Heart left ventricle (tissue), 16 donors: ENCODE measurements at regions of chr9 and their contacts with region 1.

Region 1: GRCh38 chr9:118459913-118460312 is 755.7 kb downstream of the TLR4 start:
- DNase-seq: peak in 3 of 5 donors; percentile 22 to 31 (median 27)
- ATAC-seq: peak; percentile 82 to 90 (median 89)
- H3K4me3 ChIP-seq: no peak overlapping the region
- H3K27ac ChIP-seq: peak overlapping the region in 3 of 12 donors; percentile 32 to 47 (median 43)
- H3K4me1 ChIP-seq: peaks cover 0 to 6% (median 0%) of the 10 kb centered on the region in 12 donors
- H3K27me3 ChIP-seq: no peaks in the 10 kb centered on the region
- CTCF ChIP-seq: no peak
- POLR2A ChIP-seq: no peak

Region 2: DNA sequence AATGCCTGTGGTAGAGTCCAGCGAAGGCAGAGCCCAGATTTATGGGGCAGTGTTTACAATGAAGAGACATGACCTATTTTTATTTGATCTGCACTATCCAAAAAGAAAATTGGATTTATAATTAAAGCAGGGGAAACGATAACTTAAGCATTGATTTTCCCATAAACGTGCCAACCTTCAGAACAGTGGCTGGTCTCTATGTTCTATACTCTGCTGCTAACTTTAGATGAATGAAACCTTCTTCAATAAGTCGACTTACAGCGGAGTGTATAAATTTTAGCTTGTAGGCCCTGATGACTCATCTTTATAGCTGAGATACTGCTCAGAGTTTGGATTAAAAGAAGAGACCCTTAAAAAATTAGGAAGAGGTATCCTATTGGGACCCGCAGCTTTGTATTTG is 303.1 kb before region 1 on chr9:
- intact Hi-C with region 1: no loop called
- DNase-seq: no peak
- ATAC-seq: no peak
- H3K4me3 ChIP-seq: no peak overlapping the region
- H3K27ac ChIP-seq: no peak overlapping the region
- H3K4me1 ChIP-seq: no peaks in the 10 kb centered on the region
- H3K27me3 ChIP-seq: no peaks in the 10 kb centered on the region
- CTCF ChIP-seq: no peak
- POLR2A ChIP-seq: no peak

Region 3: DNA sequence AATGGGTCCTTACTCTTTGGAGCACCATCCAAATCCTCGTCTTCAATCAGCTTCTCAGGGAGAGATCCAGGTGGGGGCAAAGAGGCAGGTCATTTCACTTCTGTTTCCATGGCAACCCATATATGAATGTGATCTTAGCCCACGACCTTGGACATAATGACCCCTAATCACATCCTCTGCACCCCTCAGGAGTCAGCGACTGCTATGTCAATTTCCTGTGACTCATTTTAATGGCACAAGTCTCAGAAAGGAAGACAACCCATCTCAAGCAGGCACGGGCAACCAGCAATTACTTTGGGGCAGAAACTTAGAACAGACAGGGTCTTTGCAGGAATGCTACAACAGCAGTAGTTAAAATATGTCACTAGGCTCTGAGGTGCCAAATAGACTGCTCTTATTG is 164.5 kb before region 1 on chr9:
- intact Hi-C with region 1: no loop called
- DNase-seq: no peak
- ATAC-seq: no peak
- H3K4me3 ChIP-seq: no peak overlapping the region
- H3K27ac ChIP-seq: no peak overlapping the region
- H3K4me1 ChIP-seq: no peaks in the 10 kb centered on the region
- H3K27me3 ChIP-seq: no peaks in the 10 kb centered on the region
- CTCF ChIP-seq: no peak
- POLR2A ChIP-seq: no peak

Region 4: GRCh38 chr9:118331622-118332045 is 128.3 kb before region 1 on chr9:
- intact Hi-C with region 1: loop called in 1 of 10 experiments (anchors 10 kb)
- DNase-seq: peak in 4 of 5 donors; percentile 28 to 43 (median 32)
- ATAC-seq: peak; percentile 94 to 97 (median 96)
- H3K4me3 ChIP-seq: no peak overlapping the region
- H3K27ac ChIP-seq: peak overlapping the region in 7 of 12 donors; percentile 29 to 74 (median 51)
- H3K4me1 ChIP-seq: peaks cover 0 to 5% (median 0%) of the 10 kb centered on the region in 12 donors
- H3K27me3 ChIP-seq: no peaks in the 10 kb centered on the region
- CTCF ChIP-seq: no peak
- POLR2A ChIP-seq: no peak

Region 5: DNA sequence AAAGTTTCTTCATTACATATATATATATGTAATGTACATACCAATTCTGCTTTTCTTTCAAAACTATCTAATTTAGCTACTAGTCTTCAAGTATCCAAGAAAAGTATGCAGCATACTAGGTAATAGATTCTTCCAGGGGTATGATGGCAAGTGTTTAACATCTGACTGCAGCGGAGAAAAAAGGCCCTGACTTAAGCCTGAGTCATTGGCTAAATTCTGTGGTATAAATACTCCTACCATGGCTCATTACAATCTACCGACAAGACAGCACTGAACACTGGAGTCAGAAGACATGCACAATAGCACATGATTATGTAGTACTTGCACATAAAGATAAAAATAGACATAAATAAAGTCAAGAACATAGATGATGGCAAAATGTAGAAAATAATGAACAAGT is 469.4 kb after region 1 on chr9:
- intact Hi-C with region 1: no loop called
- DNase-seq: no peak
- ATAC-seq: peak in 3 of 4 donors; percentile 67 to 78 (median 67)
- H3K4me3 ChIP-seq: no peak overlapping the region
- H3K27ac ChIP-seq: no peak overlapping the region
- H3K4me1 ChIP-seq: peaks cover 0 to 6% (median 0%) of the 10 kb centered on the region in 12 donors
- H3K27me3 ChIP-seq: no peaks in the 10 kb centered on the region
- CTCF ChIP-seq: no peak
- POLR2A ChIP-seq: no peak